ENCODE measurements at regions of chr6 and their contacts with region 1.

Region 1: GRCh38 chr6:141874930-141875602 is 257.7 kb upstream of the GJE1 start:
- DNase-seq: no peak
- H3K4me3 ChIP-seq: no peak overlapping the region
- H3K27ac ChIP-seq: no peak overlapping the region
- H3K4me1 ChIP-seq: no peaks in the 10 kb centered on the region
- H3K27me3 ChIP-seq: no peaks in the 10 kb centered on the region
- CTCF ChIP-seq: no peak
- EP300 ChIP-seq: no peak
- POLR2A ChIP-seq: no peak

Region 2: GRCh38 chr6:141956046-141956761 is 81.1 kb after region 1 on chr6:
- intact Hi-C with region 1: loop called in 1 of 4 experiments (anchors 2 kb)
- DNase-seq: peak in 1 of 5 donors; percentile 23
- H3K4me3 ChIP-seq: no peak overlapping the region
- H3K27ac ChIP-seq: no peak overlapping the region
- H3K4me1 ChIP-seq: peaks cover 7% of the 10 kb centered on the region
- H3K27me3 ChIP-seq: no peaks in the 10 kb centered on the region
- CTCF ChIP-seq: no peak
- EP300 ChIP-seq: no peak
- POLR2A ChIP-seq: no peak

Region 3: GRCh38 chr6:142165227-142165626 is 290.2 kb after region 1 on chr6:
- intact Hi-C with region 1: no loop called
- DNase-seq: no peak
- H3K4me3 ChIP-seq: no peak overlapping the region
- H3K27ac ChIP-seq: no peak overlapping the region
- H3K4me1 ChIP-seq: no peaks in the 10 kb centered on the region
- H3K27me3 ChIP-seq: no peaks in the 10 kb centered on the region
- CTCF ChIP-seq: no peak
- EP300 ChIP-seq: no peak
- POLR2A ChIP-seq: no peak

Measured in ovary (tissue), 10 donors.